GM18951 (cell line): ENCODE measurements at regions of chr22 and their contacts with region 1.

Region 1: DNA sequence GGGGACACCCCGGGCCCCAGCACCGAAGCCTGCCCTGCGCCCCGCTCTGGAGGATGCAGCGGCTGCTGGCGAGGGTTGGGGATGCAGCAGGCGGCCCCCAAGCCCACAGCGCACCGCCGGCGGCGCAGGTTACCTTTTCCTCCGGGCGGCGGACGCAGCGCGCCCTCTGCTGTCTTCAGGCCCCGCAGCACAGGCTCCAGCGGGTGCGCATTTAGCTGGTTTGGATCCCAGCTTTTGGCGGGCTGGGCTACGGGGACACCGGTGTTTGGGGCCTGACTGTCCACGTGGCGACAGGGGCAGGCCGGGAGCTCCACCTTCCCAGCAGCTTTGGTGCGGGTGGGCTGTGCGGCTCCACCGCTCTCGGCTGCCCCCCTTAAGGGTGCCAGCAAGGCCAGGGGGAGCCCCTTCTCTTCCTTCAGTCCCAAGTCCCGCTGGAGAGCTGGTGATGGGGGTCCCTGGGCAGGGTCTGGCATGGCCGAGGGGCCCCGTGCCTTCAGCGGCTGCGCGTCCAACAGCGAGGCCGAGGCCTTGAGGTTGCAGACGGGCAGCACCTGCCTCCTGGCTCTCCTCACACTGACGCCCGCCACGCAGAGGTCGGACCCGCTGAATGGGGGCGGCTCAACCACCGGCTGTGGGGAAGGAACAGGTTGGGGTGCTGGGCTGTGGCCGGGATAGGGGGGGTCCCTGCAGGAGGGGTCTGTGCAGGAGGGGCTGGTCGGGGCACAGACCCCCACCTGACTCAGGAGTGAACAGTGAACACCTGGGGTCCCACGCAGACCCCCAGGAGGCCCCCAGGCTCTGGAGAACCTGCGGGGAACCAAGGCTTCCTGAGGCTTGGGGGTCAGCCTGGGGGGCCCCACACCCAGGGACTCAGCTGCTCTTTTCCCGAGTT is 18.0 kb upstream of the IL17REL start:
- POLR2A ChIP-seq: no peak

Region 2: GRCh38 chr22:49930739-49931412 is 99.7 kb before region 1 on chr22:
- in situ Hi-C with region 1: loop called (anchors 5 kb)
- POLR2A ChIP-seq: no peak

Region 3: GRCh38 chr22:49942565-49943404 is 87.8 kb before region 1 on chr22:
- in situ Hi-C with region 1: no loop called
- POLR2A ChIP-seq: no peak